Caco-2 (cell line): ENCODE measurements at regions of chr2 and their contacts with region 1.

Region 1: DNA sequence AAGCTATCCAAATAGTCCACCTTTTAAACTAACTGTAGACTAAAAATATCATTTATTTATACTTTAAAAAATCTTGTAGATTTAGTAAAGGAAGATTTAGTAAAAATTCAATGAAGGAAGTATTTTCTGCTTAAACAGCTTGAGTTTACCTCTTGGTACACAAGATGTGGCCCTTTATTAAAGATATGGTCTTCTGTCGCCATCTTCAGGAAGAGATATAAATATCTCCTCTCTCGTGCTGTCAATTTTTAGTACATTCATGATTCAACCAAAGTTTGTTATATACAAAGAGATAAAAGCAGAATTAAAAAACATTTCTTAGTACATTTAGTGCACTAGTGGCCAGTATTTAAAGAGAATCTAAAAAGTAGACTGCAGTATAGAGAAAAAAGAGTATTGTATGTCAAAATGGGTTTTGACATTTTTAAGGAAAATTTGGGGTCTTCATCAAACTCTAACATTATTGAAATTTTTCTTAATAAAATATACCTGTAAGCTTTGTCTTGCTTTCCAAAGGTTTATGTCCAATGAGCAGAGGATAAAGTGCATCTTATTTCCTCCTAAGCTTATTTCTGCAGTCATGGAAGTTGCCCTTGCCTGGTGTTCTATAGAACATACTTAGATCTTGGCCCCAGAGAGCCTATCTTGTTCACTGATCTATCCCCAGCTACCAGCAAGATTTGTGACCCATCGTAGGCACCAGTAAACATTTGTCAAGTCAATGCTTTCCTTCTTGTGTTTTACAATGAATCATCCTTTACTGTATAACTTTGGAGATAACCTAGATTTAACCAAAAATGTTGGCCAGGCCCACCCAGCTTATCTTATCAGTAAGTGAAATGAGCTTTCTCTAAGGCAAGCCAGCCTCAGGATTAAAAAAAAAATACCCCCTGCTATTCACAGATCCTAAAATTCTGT is 18.5 kb upstream of the EML6 start:
- DNase-seq: peak; percentile 55 to 73
- H3K4me3 ChIP-seq: no peak overlapping the region
- H3K4me3 Mint-ChIP-seq: no peak overlapping the region
- H3K27ac Mint-ChIP-seq: no peak overlapping the region
- H3K4me1 ChIP-seq: peaks cover 35% of the 10 kb centered on the region
- H3K4me1 Mint-ChIP-seq: no peaks in the 10 kb centered on the region
- H3K27me3 ChIP-seq: no peaks in the 10 kb centered on the region
- H3K27me3 Mint-ChIP-seq: peaks cover 2% of the 10 kb centered on the region
- CTCF ChIP-seq: peak; percentile 43 to 54

Region 2: DNA sequence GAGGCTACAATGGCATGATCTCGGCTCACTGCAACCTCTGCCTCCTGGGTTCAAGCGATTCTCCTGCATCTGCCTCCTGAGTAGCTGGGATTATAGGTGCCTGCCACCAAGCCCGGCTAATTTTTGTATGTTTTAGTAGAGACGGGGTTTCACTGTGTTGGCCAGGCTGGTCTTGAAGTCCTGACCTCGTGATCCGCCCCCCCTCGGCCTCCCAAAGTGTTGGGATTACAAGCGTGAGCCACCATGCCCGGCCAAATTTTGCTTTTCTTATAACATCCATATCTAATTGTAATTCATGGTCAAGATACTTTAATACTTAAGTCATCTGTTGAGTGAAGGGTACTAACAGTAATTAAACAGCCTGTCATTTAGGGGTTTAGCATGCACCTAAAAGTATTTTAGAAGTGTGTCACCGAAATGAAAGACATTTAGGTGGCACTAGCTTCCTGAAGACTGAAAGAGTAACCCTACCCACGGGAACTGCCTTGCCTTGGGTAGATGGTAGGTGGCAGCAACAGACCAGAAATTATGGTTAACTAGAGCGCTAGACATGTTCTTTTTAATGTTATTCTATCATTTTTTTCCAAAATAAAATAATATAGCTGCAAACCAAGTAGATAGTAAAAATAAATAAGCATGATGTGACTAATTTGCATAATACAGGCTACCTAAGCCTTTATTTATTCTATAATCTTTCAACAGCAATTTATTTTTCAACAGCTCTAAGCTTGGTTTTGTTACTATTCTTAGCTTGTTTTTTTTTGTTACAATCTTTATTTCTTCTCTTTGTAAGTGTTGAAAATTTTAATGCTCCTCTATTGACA is 598.1 kb before region 1 on chr2:
- CTCF ChIA-PET with region 1: interaction called, 17 read pairs
- POLR2A ChIA-PET with region 1: no interaction called
- intact Hi-C with region 1: loop called (anchors 1 kb)
- DNase-seq: peak in 1 of 2 experiments; percentile 63
- H3K4me3 ChIP-seq: no peak overlapping the region
- H3K4me3 Mint-ChIP-seq: no peak overlapping the region
- H3K27ac Mint-ChIP-seq: no peak overlapping the region
- H3K4me1 ChIP-seq: 0 out of 2 replicates have a peak, but pooled peaks cover 4% of the 10 kb centered on the region
- H3K4me1 Mint-ChIP-seq: no peaks in the 10 kb centered on the region
- H3K27me3 ChIP-seq: no peaks in the 10 kb centered on the region
- H3K27me3 Mint-ChIP-seq: peaks cover 4% of the 10 kb centered on the region
- CTCF ChIP-seq: peak; percentile 69 to 72

Region 3: GRCh38 chr2:54115284-54116137 is 589.4 kb before region 1 on chr2 and contains the start of gene ACYP2:
- CTCF ChIA-PET with region 1: no interaction called
- POLR2A ChIA-PET with region 1: interaction called, 6 read pairs
- intact Hi-C with region 1: loop called (anchors 2 kb)
- DNase-seq: peak; percentile 97
- H3K4me3 ChIP-seq: peak within 1 kb of the TSS; percentile 68
- H3K4me3 Mint-ChIP-seq: peak within 1 kb of the TSS; percentile 99
- H3K27ac Mint-ChIP-seq: peak within 1 kb of the TSS; percentile 100
- H3K4me1 ChIP-seq: no peaks in the 10 kb centered on the region
- H3K4me1 Mint-ChIP-seq: no peaks in the 10 kb centered on the region
- H3K27me3 ChIP-seq: no peaks in the 10 kb centered on the region
- H3K27me3 Mint-ChIP-seq: no peaks in the 10 kb centered on the region
- CTCF ChIP-seq: peak in 1 of 2 experiments; percentile 21
- total RNA-seq, gene ACYP2: 4.1 and 5.4 TPM in 2 replicates

Region 4: DNA sequence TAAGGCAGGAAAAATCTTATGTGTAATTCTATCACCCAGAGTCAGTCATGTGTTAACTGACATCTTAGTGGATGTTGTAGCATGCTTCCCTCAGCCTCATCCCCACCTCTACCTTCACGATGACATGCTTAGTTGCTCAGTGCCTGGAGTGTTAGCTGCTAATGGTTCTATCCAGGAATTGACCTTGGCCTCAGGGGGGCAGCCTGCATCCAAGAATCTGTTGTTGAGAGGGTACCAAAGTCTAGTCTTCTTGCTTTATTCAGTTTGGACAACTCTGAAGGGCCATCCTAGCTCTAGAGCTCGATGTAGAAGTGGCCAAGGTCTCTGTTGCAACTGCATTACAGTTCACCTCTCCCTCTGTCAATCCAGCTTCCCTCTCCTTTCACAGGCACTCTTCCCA is 528.4 kb before region 1 on chr2:
- CTCF ChIA-PET with region 1: no interaction called
- POLR2A ChIA-PET with region 1: no interaction called
- intact Hi-C with region 1: loop called (anchors 1 kb)
- DNase-seq: peak; percentile 52 to 72
- H3K4me3 ChIP-seq: no peak overlapping the region
- H3K4me3 Mint-ChIP-seq: no peak overlapping the region
- H3K27ac Mint-ChIP-seq: no peak overlapping the region
- H3K4me1 ChIP-seq: no peaks in the 10 kb centered on the region
- H3K4me1 Mint-ChIP-seq: no peaks in the 10 kb centered on the region
- H3K27me3 ChIP-seq: no peaks in the 10 kb centered on the region
- H3K27me3 Mint-ChIP-seq: no peaks in the 10 kb centered on the region
- CTCF ChIP-seq: peak; percentile 55 to 61

Region 5: DNA sequence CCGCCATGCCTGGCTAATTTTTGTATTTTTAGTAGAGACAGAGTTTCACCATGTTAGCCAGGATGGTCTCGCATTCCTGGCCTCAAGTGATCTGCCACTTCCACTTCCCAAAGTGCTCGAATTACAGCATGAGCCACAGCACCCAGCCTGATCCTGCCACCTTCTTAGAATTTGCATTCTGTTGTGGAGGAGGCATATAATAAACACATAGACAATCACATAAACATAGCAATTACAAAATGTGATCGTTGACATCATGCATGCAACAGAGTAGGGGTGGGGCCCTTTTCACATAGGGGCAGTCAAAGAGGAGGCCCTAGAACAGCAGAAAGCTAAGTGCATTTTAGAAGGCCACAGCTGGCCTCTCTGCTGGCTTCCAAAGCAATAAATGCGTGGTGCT is 409.0 kb before region 1 on chr2:
- CTCF ChIA-PET with region 1: no interaction called
- POLR2A ChIA-PET with region 1: no interaction called
- intact Hi-C with region 1: no loop called
- DNase-seq: no peak
- H3K4me3 ChIP-seq: no peak overlapping the region
- H3K4me3 Mint-ChIP-seq: no peak overlapping the region
- H3K27ac Mint-ChIP-seq: no peak overlapping the region
- H3K4me1 ChIP-seq: no peaks in the 10 kb centered on the region
- H3K4me1 Mint-ChIP-seq: peaks cover 1% of the 10 kb centered on the region
- H3K27me3 ChIP-seq: no peaks in the 10 kb centered on the region
- H3K27me3 Mint-ChIP-seq: no peaks in the 10 kb centered on the region
- CTCF ChIP-seq: no peak

Region 6: GRCh38 chr2:54657664-54658083 is 47.3 kb before region 1 on chr2:
- CTCF ChIA-PET with region 1: interaction called, 18 read pairs
- POLR2A ChIA-PET with region 1: no interaction called
- intact Hi-C with region 1: loop called (anchors 1 kb)
- DNase-seq: peak; percentile 64 to 75
- H3K4me3 ChIP-seq: no peak overlapping the region
- H3K4me3 Mint-ChIP-seq: no peak overlapping the region
- H3K27ac Mint-ChIP-seq: peak overlapping the region; percentile 76
- H3K4me1 ChIP-seq: no peaks in the 10 kb centered on the region
- H3K4me1 Mint-ChIP-seq: peaks cover 8% of the 10 kb centered on the region
- H3K27me3 ChIP-seq: no peaks in the 10 kb centered on the region
- H3K27me3 Mint-ChIP-seq: no peaks in the 10 kb centered on the region
- CTCF ChIP-seq: peak; percentile 60 to 69

Region 7: GRCh38 chr2:54665436-54665856 is 39.5 kb before region 1 on chr2:
- CTCF ChIA-PET with region 1: interaction called, 79 read pairs
- POLR2A ChIA-PET with region 1: interaction called, 7 read pairs
- intact Hi-C with region 1: loop called (anchors 1 kb)
- DNase-seq: peak; percentile 63 to 70
- H3K4me3 ChIP-seq: no peak overlapping the region
- H3K4me3 Mint-ChIP-seq: peak overlapping the region; percentile 8
- H3K27ac Mint-ChIP-seq: peak overlapping the region; percentile 83
- H3K4me1 ChIP-seq: peaks cover 33% of the 10 kb centered on the region
- H3K4me1 Mint-ChIP-seq: peaks cover 41% of the 10 kb centered on the region
- H3K27me3 ChIP-seq: no peaks in the 10 kb centered on the region
- H3K27me3 Mint-ChIP-seq: no peaks in the 10 kb centered on the region
- CTCF ChIP-seq: peak; percentile 55 to 68

Region 8: GRCh38 chr2:54691445-54692135 is 13.4 kb before region 1 on chr2:
- CTCF ChIA-PET with region 1: interaction called, 33 read pairs
- POLR2A ChIA-PET with region 1: no interaction called
- intact Hi-C with region 1: loop called (anchors 1 kb)
- DNase-seq: peak; percentile 74 to 81
- H3K4me3 ChIP-seq: no peak overlapping the region
- H3K4me3 Mint-ChIP-seq: no peak overlapping the region
- H3K27ac Mint-ChIP-seq: no peak overlapping the region
- H3K4me1 ChIP-seq: peaks cover 16% of the 10 kb centered on the region
- H3K4me1 Mint-ChIP-seq: peaks cover 9% of the 10 kb centered on the region
- H3K27me3 ChIP-seq: no peaks in the 10 kb centered on the region
- H3K27me3 Mint-ChIP-seq: no peaks in the 10 kb centered on the region
- CTCF ChIP-seq: peak in 1 of 2 experiments; percentile 7

Region 9: DNA sequence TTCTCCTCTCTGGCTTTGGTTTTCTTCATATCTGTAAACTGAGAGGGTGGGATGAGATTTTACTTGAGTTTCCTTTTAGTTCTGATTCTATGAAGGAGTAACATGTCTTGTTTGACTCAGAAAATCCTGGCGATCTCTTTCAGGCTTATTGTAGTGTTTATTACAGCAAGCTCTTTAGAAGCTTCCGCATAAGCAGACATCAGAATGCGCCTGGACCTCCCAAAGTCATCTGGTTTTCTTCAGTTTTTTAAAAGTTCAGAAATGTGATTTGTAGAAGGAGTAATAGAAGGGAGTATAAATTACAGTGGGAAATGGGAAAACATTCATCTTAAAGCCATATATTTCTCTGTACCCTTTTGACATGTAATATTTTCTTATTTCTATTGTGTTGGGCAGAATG is 86.9 kb after region 1 on chr2:
- CTCF ChIA-PET with region 1: no interaction called
- POLR2A ChIA-PET with region 1: no interaction called
- intact Hi-C with region 1: no loop called
- DNase-seq: no peak
- H3K4me3 ChIP-seq: no peak overlapping the region
- H3K4me3 Mint-ChIP-seq: no peak overlapping the region
- H3K27ac Mint-ChIP-seq: no peak overlapping the region
- H3K4me1 ChIP-seq: no peaks in the 10 kb centered on the region
- H3K4me1 Mint-ChIP-seq: no peaks in the 10 kb centered on the region
- H3K27me3 ChIP-seq: no peaks in the 10 kb centered on the region
- H3K27me3 Mint-ChIP-seq: no peaks in the 10 kb centered on the region
- CTCF ChIP-seq: no peak

Region 10: DNA sequence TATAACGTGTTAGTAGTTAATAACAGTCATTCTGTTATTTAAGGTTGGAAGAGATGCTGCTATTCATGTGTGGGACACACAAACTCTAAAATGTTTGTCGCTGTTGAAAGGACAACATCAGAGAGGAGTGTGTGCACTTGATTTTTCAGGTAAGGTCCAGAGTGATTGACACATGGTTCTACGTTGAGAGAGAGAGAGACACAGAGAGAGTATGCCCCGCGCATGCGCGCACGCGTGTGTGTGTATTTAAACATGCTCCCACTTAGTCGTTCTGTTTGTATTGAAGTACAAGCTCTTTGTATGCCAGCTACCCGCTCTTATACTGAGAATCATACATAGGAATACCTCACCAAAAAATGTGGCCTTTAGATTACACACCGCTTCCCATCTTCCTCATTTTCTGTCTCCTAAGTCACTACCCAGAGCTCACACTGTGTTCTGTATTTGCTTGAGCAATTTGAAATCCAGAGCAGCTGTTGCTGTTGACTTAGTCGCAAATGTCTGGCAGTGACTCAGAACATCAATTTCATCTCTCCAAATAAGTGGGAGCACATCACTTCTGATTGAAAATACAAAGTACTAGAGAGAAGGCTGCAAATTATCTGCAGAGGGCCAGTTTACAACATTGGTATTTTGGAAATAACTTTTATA is 166.6 kb after region 1 on chr2:
- CTCF ChIA-PET with region 1: no interaction called
- POLR2A ChIA-PET with region 1: no interaction called
- intact Hi-C with region 1: no loop called
- DNase-seq: no peak
- H3K4me3 ChIP-seq: no peak overlapping the region
- H3K4me3 Mint-ChIP-seq: no peak overlapping the region
- H3K27ac Mint-ChIP-seq: no peak overlapping the region
- H3K4me1 ChIP-seq: peaks cover 20% of the 10 kb centered on the region
- H3K4me1 Mint-ChIP-seq: peaks cover 18% of the 10 kb centered on the region
- H3K27me3 ChIP-seq: no peaks in the 10 kb centered on the region
- H3K27me3 Mint-ChIP-seq: no peaks in the 10 kb centered on the region
- CTCF ChIP-seq: no peak